ENCODE measurements at regions of chr1 and their contacts with region 1.

Region 1: DNA sequence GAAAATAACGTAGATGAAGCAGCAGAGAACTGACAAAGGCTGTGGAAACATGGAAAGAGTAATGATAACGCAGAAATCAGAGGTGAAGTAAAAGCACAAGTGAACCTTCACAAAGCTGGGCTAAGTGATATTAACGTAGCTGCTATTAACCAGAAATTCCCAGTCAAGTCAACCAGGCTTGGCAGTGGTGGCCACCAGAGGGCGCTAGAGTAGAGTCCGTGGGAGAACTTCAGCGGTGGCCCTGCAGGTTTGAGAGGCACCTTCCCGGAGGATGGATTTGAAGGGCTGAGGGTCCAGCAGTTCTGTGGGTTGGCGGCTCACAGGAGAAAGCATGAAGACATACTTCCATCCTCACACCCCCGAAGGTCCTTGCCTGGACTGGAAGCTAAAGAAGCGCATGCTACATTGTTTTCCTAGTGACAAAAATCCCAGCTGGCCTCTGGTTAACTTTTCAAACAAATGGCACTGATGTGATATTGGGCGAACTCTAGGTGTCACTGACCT is 81.7 kb upstream of the ZNF648 start:
- DNase-seq: peak; percentile 91
- ATAC-seq: peak; percentile 58
- H3K4me3 Mint-ChIP-seq: no peak overlapping the region
- H3K27ac Mint-ChIP-seq: no peak overlapping the region
- H3K4me1 Mint-ChIP-seq: peaks cover 8% of the 10 kb centered on the region
- H3K27me3 Mint-ChIP-seq: peaks cover 6% of the 10 kb centered on the region
- CTCF ChIP-seq: peak; percentile 89

Region 2: GRCh38 chr1:181898773-181899172 is 244.4 kb before region 1 on chr1:
- CTCF ChIA-PET with region 1: no interaction called
- POLR2A ChIA-PET with region 1: no interaction called
- intact Hi-C with region 1: no loop called
- DNase-seq: no peak
- ATAC-seq: no peak
- H3K4me3 Mint-ChIP-seq: no peak overlapping the region
- H3K27ac Mint-ChIP-seq: no peak overlapping the region
- H3K4me1 Mint-ChIP-seq: no peaks in the 10 kb centered on the region
- H3K27me3 Mint-ChIP-seq: peaks cover 13% of the 10 kb centered on the region
- CTCF ChIP-seq: no peak

Region 3: DNA sequence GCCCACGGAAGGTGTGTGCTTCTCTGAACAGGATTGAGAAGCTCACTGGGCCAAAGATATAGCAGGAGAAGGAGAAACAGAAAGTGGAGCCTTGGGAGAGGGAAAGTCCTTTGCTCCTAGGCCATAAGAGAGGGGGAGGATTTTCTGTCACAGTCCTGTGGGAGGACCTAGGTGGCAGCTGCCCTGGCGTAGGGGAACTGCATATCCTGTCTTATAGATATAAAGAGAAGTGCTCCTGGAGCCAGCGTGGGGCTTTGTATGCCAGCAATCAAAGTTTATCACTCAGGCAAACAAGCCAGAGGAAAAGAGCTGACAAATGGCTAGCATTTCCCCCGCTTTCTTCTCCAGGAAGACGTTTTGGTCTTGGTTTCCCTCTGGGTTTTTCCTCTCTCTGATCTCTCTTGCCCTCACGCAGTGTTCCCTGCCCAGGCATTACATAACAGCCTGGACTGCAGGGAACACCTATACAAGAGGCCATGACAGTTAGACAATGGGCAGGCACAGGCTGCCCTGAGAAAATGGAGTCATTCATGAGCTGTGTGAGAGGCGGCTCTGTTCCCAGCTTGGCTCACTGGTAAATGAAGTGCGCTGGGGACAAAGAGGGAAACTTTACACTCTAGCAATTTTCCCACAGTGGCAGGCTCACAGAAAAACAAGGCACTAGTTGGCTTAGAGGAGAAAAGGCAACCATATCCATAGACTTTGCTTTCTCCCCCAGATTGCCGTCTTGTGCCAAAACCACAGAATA is 29.2 kb before region 1 on chr1:
- CTCF ChIA-PET with region 1: interaction called, 22 read pairs
- POLR2A ChIA-PET with region 1: no interaction called
- intact Hi-C with region 1: no loop called
- DNase-seq: no peak
- ATAC-seq: no peak
- H3K4me3 Mint-ChIP-seq: no peak overlapping the region
- H3K27ac Mint-ChIP-seq: no peak overlapping the region
- H3K4me1 Mint-ChIP-seq: no peaks in the 10 kb centered on the region
- H3K27me3 Mint-ChIP-seq: peaks cover 11% of the 10 kb centered on the region
- CTCF ChIP-seq: no peak

Region 4: GRCh38 chr1:182170891-182171461 is 27.8 kb after region 1 on chr1:
- CTCF ChIA-PET with region 1: interaction called, 12 read pairs
- POLR2A ChIA-PET with region 1: no interaction called
- intact Hi-C with region 1: no loop called
- DNase-seq: no peak
- ATAC-seq: no peak
- H3K4me3 Mint-ChIP-seq: no peak overlapping the region
- H3K27ac Mint-ChIP-seq: no peak overlapping the region
- H3K4me1 Mint-ChIP-seq: peaks cover 7% of the 10 kb centered on the region
- H3K27me3 Mint-ChIP-seq: no peaks in the 10 kb centered on the region
- CTCF ChIP-seq: no peak

Region 5: DNA sequence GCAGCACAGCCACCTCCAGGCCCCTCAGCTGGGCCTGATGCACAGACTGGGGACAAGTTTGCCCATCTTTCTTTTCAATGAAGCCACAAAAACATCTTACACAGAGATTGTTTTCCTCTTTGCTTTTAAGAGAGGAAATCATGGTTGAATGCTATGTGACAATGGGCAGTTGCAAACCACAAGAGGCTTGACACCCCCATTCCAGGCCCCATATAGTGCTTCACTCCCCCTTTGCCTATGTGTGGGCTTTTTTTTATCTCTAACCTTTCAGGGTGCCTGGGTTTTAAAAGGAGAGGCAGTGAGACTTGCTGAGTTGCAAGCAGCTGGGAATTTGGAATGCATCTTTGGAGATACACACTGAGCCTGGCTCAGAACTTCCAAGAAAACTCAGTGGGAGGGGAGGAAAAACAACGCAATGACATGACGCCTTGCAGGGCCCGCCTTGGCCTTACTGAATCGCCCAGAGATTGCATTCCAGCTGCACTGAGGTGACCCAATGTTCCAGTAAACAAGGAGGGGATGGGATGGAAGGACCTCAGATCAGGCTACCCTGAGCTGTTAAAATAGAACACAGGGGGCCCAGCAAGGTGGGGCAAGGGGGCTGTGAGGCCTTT is 63.5 kb after region 1 on chr1:
- CTCF ChIA-PET with region 1: interaction called, 10 read pairs
- POLR2A ChIA-PET with region 1: no interaction called
- intact Hi-C with region 1: no loop called
- DNase-seq: no peak
- ATAC-seq: no peak
- H3K4me3 Mint-ChIP-seq: no peak overlapping the region
- H3K27ac Mint-ChIP-seq: no peak overlapping the region
- H3K4me1 Mint-ChIP-seq: no peaks in the 10 kb centered on the region
- H3K27me3 Mint-ChIP-seq: no peaks in the 10 kb centered on the region
- CTCF ChIP-seq: no peak

Region 6: GRCh38 chr1:182288749-182289604 is 145.8 kb after region 1 on chr1:
- CTCF ChIA-PET with region 1: interaction called, 12 read pairs
- POLR2A ChIA-PET with region 1: no interaction called
- intact Hi-C with region 1: no loop called
- DNase-seq: no peak
- ATAC-seq: no peak
- H3K4me3 Mint-ChIP-seq: no peak overlapping the region
- H3K27ac Mint-ChIP-seq: no peak overlapping the region
- H3K4me1 Mint-ChIP-seq: no peaks in the 10 kb centered on the region
- H3K27me3 Mint-ChIP-seq: no peaks in the 10 kb centered on the region
- CTCF ChIP-seq: no peak

Region 7: DNA sequence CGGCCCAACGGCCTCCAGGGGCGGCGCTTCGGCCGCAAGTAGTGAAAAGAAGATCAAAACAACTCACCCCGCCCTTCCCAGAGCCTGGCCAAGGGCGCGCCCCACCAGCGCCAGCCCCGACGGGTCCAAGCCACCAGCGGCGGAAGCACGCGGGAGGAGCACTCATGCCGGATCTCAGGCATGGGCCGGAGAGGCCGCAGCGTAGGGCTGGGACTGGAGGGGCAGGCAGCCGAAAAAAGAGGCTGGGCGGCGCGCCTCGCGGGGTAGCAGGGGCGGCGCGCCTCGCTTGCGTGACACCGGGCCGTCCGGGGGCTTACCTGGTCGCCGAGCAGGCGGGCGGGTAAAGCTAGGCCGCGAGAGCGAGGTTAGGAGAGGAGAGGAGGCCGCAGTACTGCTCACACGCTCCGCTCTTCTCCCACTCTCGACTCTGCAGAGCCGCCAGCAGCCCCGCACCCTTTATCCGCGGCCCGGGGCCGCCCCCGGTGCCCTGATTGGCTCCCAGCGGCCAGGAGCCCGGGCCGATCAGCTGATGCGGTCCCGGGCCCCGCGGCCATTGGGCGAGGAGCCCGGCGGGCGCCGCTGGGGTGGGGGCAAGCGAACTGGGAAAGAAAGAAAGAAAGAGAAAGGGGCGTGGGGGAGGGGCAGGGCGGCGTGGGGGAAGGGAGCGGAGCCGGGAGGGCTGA is 248.3 kb after region 1 on chr1 and contains the start of gene GLUL:
- CTCF ChIA-PET with region 1: interaction called, 270 read pairs
- POLR2A ChIA-PET with region 1: interaction called, 5 read pairs
- intact Hi-C with region 1: loop called (anchors 1 kb)
- DNase-seq: peak; percentile 67
- ATAC-seq: peak; percentile 77
- H3K4me3 Mint-ChIP-seq: peak within 1 kb of the TSS; percentile 78
- H3K27ac Mint-ChIP-seq: peak within 1 kb of the TSS; percentile 77
- H3K4me1 Mint-ChIP-seq: peaks cover 15% of the 10 kb centered on the region
- H3K27me3 Mint-ChIP-seq: peaks cover 24% of the 10 kb centered on the region
- CTCF ChIP-seq: no peak
- total RNA-seq, gene GLUL: 50.6 to 52.8 TPM